Heart left ventricle (tissue), 16 donors: ENCODE measurements at regions of chr3 and their contacts with region 1.

Region 1: GRCh38 chr3:100988080-100988479 is 5.1 kb downstream of the ABI3BP start:
- DNase-seq: no peak
- ATAC-seq: no peak
- H3K4me3 ChIP-seq: no peak overlapping the region
- H3K27ac ChIP-seq: no peak overlapping the region
- H3K4me1 ChIP-seq: peaks cover 0 to 16% (median 0%) of the 10 kb centered on the region in 12 donors
- H3K27me3 ChIP-seq: no peaks in the 10 kb centered on the region
- CTCF ChIP-seq: no peak
- POLR2A ChIP-seq: no peak

Region 2: DNA sequence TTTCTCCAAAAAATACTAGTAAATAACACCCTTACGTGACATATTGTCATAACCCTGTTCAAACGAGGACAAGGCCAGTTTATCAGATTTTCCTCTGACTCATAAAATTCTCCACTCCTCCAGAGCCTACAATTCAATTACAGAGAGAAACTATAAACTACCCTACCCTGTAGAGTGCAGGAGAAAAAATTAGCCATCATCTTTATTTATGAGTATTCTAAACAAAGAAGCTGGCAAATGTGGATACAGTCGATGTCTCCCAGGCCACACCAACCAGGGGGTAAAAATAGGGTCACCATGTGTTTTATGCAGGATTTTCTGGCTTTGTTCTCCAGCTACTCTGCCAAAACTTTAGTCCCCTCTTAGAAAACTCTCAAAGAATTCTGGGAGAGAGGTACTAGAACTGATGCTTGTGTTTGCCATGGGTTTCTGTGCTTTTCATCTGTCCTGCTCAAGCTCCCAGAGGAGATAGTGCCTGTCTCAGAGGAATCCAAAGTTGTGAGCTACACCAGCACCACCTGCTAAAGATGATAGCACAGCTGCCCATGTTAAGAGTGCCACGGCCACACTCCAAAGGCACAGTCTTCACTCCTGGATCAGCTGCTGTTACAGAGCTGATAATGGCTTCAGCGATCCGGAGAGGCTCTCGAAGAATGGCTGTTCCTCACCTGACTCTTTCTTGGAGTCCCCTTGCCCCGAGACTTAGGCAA is 182.1 kb after region 1 on chr3:
- intact Hi-C with region 1: loop called in 1 of 10 experiments (anchors 5 kb)
- DNase-seq: peak in 1 of 5 donors; percentile 27
- ATAC-seq: peak; percentile 29 to 65 (median 40)
- H3K4me3 ChIP-seq: no peak overlapping the region
- H3K27ac ChIP-seq: peak overlapping the region in 7 of 12 donors; percentile 3 to 60 (median 52)
- H3K4me1 ChIP-seq: peaks cover 0 to 27% (median 0%) of the 10 kb centered on the region in 12 donors
- H3K27me3 ChIP-seq: no peaks in the 10 kb centered on the region
- CTCF ChIP-seq: no peak
- POLR2A ChIP-seq: no peak

Region 3: DNA sequence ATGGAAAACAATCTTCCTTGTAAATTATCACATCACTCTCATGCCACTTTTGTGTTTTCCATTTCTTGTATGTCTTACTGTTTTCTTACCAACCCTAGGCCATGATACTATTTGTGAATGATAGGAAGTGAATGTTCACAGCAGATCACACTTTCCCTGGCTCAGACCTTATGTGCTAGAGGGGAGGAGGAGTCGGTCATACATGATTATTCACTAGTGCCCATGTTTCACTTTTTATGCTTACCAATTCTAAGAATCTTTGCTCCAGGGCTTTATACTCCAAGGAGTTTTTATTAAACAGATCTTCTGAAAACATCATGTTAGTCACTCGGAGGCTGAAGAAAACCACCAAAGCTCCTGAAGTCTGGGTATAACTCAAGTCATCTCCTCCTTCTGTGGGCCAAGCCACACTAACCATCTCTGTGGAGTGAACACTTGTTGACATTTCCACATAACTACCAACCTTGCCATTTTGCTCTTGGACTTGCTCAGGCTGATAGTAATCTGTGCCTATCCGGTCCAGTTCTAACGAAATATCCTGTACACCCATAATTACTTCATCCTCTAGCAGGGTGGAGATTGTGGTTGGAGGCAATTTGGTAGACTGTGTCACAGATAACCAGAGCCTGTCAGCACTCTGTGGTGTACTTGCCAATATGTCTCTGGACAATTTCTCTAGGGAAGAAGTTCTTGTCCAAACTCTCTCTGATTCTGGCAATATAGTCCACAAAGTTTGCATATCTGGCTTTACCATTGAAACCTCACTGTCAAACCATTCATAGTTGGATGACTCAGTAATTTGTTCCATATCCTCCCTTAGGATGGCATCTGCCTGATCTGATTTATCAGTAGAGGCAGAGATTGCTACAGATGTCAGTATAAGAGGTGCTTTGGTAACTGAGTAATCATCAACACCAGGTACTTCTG is 255.5 kb after region 1 on chr3:
- intact Hi-C with region 1: no loop called
- DNase-seq: no peak
- ATAC-seq: peak in 1 of 4 donors; percentile 69
- H3K4me3 ChIP-seq: no peak overlapping the region
- H3K27ac ChIP-seq: peak overlapping the region in 1 of 12 donors; percentile 29
- H3K4me1 ChIP-seq: no peaks in the 10 kb centered on the region
- H3K27me3 ChIP-seq: no peaks in the 10 kb centered on the region
- CTCF ChIP-seq: no peak
- POLR2A ChIP-seq: no peak